ENCODE measurements at regions of chrX and their contacts with region 1.

Region 1: DNA sequence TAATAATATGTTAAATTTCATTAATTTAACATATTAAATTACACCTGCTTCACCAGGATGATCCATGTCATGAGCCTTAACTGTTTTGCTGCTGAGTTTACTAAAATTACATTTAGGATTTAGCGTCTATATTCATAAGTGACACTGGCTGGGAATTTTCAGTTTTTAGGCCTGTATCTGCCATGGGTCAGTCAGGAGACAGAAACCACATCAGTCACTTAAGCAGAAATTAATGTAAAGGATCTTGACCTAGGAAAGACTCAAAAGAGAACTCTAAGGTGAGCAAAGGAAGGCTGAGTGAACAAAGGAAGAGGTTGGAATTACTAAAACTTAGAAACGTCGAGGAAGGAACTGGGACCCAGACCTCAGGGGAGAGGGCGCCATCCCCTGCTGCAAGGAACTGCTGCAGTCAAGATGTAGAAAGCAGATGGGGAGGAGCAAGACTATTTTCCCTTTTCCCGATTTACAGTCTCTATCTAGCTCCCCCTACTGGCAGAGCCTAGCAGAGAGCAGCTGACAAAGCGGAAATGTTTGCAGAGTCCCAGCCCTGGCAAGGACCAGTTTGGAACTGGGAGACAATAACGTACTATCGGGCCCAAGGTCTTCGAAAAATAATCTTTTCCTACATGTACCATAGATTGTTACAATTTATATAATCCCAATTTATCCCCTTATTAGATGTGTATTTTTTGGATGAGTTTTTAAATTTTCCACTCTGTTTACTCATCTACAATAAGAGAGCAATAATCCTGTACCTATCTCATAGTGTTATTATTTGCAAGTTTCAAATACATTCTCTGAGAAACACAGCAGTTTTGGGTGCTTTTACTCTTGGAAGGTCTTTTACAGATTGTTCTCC is 22.6 kb upstream of the RBBP7 start:
- DNase-seq: peak; percentile 60 to 87 (median 69)
- ATAC-seq: peak; percentile 98
- H3K4me3 ChIP-seq: no peak overlapping the region
- H3K27ac ChIP-seq: no peak overlapping the region
- H3K4me1 ChIP-seq: no peaks in the 10 kb centered on the region
- H3K27me3 ChIP-seq: peaks cover 3 to 8% of the 10 kb centered on the region in 2 experiments; a peak in 2 of 5 replicates
- CTCF ChIP-seq: peak; percentile 89 to 92 (median 92)
- EP300 ChIP-seq: no peak
- POLR2A ChIP-seq: no peak
- RAD21 ChIP-seq: peak; percentile 44 to 67

Region 2: DNA sequence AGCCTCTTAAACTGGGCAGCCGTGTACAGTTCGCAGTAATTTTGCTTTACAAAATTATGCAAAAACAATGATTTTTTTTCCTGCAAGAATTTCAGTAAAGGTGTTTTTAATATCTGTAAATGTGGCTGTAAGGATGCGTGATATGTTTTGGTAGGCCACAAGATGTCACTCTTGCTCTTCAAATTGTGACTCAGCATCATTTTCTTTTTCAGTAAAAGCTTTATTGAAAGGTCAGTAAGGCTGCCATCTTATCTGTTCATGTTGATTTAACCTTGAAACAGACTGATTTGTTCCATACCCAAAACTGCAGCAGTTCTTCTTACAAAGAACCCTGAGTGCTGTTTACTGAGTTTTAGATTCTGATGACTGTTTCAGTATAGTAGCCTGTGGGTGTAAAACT is 66.5 kb before region 1 on chrX:
- CTCF ChIA-PET with region 1: no interaction called
- POLR2A ChIA-PET with region 1: no interaction called
- in situ Hi-C with region 1: no loop called
- intact Hi-C with region 1: loop called (anchors 5 kb)
- DNase-seq: peak; percentile 21 to 45 (median 24)
- ATAC-seq: peak; percentile 85
- H3K4me3 ChIP-seq: no peak overlapping the region
- H3K27ac ChIP-seq: no peak overlapping the region
- H3K4me1 ChIP-seq: no peaks in the 10 kb centered on the region; a peak in 1 of 5 replicates
- H3K27me3 ChIP-seq: no peaks in the 10 kb centered on the region
- CTCF ChIP-seq: peak in 2 of 3 experiments; percentile 52 to 68; a peak in 4 of 6 replicates
- EP300 ChIP-seq: no peak
- POLR2A ChIP-seq: no peak
- RAD21 ChIP-seq: peak; percentile 49 to 61